ENCODE measurements at regions of chr1 and their contacts with region 1.

Region 1: DNA sequence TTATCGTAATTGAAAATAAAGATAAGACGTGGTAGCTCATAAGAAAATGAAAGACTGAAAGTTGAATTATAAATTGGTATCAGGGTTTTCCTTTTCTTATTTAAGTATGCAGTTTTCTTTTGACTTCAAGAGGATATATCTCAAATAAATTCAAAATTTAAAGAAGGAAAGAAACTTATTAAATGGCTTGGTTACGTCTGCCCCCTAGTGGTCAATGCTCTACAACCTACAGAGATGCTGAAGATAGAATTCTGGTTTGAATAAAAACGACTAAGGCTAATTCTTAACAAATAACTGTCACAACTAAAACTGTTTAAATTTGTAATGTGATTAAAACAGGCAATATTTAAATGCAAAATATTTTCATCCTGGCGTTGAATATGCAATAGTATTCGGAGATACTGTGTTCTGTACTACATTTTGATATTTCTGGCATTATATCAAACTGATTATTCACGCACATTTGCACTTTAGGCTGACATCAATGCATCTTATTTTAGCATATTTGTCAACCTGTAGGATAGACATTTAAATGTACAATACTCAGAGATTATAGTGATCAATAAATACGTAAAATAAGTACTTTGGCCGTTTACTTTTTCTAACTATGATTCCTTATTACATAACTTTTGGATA is 26.8 kb downstream of the IFI44 start:
- DNase-seq: peak in 3 of 6 donors; percentile 22 to 49 (median 32)
- ATAC-seq: peak in 3 of 4 donors; percentile 77 to 82 (median 78)
- H3K4me3 ChIP-seq: no peak overlapping the region
- H3K27ac ChIP-seq: no peak overlapping the region
- H3K4me1 ChIP-seq: no peaks in the 10 kb centered on the region
- H3K27me3 ChIP-seq: no peaks in the 10 kb centered on the region
- CTCF ChIP-seq: peak; percentile 72 to 80 (median 75)

Region 2: DNA sequence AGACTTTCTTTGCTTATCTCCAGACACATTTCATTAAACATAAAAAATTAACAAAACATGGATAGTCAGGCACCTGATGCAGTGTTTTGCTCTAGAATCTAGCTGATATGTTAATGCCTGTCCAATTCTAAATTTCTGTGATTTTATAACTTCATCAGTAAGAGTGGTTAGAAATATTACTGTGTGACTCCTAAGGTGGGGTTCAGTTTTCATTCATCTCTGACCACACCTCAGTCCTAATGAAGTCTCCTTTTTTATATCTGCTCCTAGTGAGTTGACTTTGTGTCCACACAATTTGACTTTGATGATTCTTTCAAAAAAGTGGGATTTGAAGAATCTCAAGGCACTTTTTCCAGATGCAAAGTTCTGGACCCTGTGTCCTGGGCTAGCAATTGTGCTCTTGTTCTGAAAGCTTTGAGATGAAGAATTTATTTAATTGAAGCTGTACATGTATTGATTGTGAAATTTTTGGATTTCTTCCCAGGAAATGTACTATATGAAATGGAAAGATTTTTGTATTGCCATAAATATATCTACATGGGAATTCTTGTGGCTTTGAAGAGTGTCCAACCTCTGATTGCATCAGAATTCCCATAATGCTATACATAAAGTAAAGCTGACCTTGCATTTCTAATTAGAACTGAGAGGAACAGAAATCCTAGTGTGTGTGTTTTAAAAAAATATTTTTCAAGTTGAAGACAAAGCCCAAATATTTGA is 519.5 kb before region 1 on chr1:
- intact Hi-C with region 1: loop called in 1 of 3 experiments (anchors 10 kb)
- DNase-seq: no peak
- ATAC-seq: no peak
- H3K4me3 ChIP-seq: no peak overlapping the region
- H3K27ac ChIP-seq: no peak overlapping the region
- H3K4me1 ChIP-seq: no peaks in the 10 kb centered on the region
- H3K27me3 ChIP-seq: no peaks in the 10 kb centered on the region
- CTCF ChIP-seq: no peak

Region 3: GRCh38 chr1:78617615-78618026 is 58.8 kb before region 1 on chr1:
- intact Hi-C with region 1: loop called in 2 of 3 experiments (anchors 5 to 10 kb)
- DNase-seq: peak in 5 of 6 donors; percentile 69 to 81 (median 73)
- ATAC-seq: peak; percentile 93 to 98 (median 97)
- H3K4me3 ChIP-seq: no peak overlapping the region
- H3K27ac ChIP-seq: no peak overlapping the region
- H3K4me1 ChIP-seq: peaks cover 0 to 6% (median 0%) of the 10 kb centered on the region in 3 donors
- H3K27me3 ChIP-seq: no peaks in the 10 kb centered on the region
- CTCF ChIP-seq: peak; percentile 58 to 79 (median 64)

Measured in pancreas (tissue), 10 donors.